ENCODE measurements at regions of chr19 and their contacts with region 1.

Region 1: DNA sequence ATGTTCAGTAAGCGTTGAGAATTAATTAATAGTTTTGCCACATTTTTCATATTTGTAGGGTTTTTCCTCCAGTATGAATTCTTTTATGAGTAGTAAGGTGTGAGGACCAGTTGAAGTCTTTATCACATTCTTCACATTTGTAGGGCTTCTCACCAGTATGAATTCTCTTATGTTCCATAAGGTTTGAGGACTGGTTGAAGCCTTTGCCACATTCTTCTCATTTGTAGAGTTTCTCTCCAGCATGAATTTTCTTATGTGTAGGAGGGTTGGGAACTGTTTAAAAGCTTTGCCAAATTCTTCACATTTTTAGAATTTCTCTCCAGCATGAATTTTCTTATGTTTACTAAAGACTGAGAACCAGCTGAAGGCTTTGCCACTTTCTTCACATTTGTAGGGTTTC is 40.3 kb downstream of the ZNF208 start:
- DNase-seq: no peak
- ATAC-seq: no peak

Region 2: DNA sequence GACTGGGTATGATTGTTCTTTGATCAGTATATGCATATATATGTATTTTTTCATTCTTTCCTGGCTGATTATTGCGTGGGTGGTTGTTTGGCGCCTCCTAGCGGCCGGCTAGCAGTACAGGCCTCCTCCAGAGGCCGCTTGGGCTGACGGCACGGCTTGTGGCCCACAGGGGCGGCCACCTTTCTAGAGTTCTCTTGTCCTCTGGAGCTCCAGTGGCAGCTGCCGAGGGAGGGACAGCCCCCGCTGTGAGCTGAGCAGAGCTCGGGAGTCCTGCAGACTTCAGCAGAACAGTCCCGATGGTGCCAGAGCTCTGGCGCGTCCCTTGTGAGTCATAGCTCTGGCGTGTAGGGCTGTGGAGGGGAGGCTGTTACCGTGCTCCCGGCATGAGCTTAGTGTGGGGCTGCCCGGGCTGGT is 487.6 kb before region 1 on chr19:
- intact Hi-C with region 1: no loop called
- DNase-seq: peak; percentile 58
- ATAC-seq: peak; percentile 77

Region 3: DNA sequence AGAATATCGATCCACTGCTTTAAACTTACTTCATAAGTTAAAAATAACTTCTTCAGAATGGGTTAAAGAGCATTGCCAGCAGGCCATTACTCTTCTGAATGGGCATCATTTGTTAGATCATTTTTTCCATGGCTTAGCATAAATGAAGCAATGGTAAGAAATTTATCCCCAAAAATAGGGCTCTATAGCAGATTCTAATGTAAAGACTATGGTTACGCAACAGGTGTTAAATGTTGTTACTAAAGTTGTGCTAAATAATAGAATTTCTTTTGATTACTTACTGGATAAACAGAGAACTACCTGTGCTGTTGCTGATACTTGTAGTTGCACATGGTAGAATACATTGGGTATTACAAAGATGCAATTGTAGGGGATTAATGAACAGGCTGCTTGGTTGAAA is 467.5 kb after region 1 on chr19:
- intact Hi-C with region 1: loop called (anchors 10 kb)
- DNase-seq: no peak
- ATAC-seq: no peak

Measured in sciatic nerve (tissue), 2 donors.